ENCODE measurements at regions of chr19 and their contacts with region 1.

Region 1: DNA sequence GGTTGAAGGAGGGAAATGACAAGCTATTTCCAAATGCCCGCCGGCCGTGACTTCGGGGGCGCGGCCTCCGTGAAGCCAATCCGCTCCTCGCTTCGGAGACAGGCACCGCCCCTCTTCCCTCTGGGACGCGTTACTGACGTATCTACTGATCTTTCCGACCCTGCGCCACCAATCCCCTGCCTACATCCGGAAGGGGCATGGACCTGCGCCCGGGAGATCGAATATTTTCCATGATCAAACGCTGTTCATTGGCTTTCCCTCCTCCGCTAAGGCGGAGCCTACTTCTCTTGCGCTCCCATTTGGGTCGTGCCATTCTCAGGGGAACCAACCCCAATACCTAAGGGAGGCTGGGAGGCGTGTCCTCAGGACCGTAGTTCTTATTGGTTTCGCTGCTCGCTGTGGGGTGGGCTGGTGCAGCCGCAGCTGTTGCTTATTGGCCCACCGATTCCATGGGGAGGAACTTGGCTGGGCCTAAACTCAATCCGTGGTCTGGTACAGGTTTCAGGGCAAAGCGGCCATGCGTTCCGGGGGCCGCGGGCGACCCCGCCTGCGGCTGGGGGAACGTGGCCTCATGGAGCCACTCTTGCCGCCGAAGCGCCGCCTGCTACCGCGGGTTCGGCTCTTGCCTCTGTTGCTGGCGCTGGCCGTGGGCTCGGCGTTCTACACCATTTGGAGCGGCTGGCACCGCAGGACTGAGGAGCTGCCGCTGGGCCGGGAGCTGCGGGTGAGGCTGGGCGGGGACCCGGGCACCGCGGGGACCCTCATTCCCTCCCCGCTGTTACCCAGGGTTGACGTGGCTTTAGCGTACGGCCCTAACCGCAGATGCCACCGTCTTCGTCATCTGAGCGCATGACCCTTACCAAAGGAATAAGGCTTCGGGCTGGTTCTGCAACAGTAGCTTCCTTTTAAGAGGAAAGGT is at the start of gene QPCTL:
- DNase-seq: peak; percentile 100
- H3K4me3 Mint-ChIP-seq: peak within 1 kb of the TSS; percentile 85
- H3K27ac Mint-ChIP-seq: peak within 1 kb of the TSS; percentile 95
- H3K4me1 Mint-ChIP-seq: peaks cover 6% of the 10 kb centered on the region
- H3K27me3 Mint-ChIP-seq: no peaks in the 10 kb centered on the region
- CTCF ChIP-seq: no peak
- total RNA-seq, gene QPCTL: 14.9 and 17.3 TPM in 2 replicates

Region 2: DNA sequence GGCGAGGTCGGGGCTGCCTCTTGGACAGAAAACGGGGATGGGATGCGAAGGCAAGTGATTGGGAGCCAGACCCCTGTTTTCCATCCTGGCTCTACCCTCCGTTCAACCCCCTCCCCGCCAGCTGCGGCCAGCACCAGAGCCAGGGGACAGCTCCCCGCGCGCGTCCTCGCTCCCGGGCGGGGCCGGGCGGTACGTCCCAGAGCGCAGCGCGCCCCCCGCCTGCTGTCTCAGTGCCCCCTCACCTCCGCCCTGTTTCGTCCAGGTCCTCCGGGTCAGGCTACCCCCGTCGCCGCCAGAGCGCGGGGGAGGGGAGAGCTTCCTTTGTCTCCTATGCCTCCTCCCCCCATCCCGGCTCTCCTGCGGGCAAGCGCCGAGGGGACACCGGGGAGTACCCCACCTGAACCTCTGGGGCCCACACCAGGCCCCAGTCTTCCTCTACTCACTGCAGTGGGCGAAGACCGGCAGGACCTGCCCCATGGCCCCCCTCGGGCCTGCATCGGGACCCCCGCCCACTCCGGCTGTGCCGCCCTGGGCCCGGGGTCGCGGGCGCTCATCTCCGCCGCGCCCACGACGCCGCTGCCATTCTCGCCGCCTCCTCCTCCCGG is 196.0 kb before region 1 on chr19:
- CTCF ChIA-PET with region 1: no interaction called
- POLR2A ChIA-PET with region 1: no interaction called
- intact Hi-C with region 1: no loop called
- DNase-seq: no peak
- H3K4me3 Mint-ChIP-seq: peak overlapping the region; percentile 75
- H3K27ac Mint-ChIP-seq: peak overlapping the region; percentile 24
- H3K4me1 Mint-ChIP-seq: peaks cover 13% of the 10 kb centered on the region
- H3K27me3 Mint-ChIP-seq: no peaks in the 10 kb centered on the region
- CTCF ChIP-seq: no peak

Region 3: GRCh38 chr19:45584332-45585157 is 107.9 kb before region 1 on chr19 and contains the start of gene OPA3:
- CTCF ChIA-PET with region 1: no interaction called
- POLR2A ChIA-PET with region 1: interaction called, 20 read pairs
- intact Hi-C with region 1: no loop called
- DNase-seq: peak; percentile 100
- H3K4me3 Mint-ChIP-seq: peak within 1 kb of the TSS; percentile 97
- H3K27ac Mint-ChIP-seq: peak within 1 kb of the TSS; percentile 98
- H3K4me1 Mint-ChIP-seq: peaks cover 11% of the 10 kb centered on the region
- H3K27me3 Mint-ChIP-seq: no peaks in the 10 kb centered on the region
- CTCF ChIP-seq: no peak
- total RNA-seq, gene OPA3: 16.8 and 17.3 TPM in 2 replicates

Region 4: GRCh38 chr19:45681391-45682015 is 10.9 kb before region 1 on chr19:
- CTCF ChIA-PET with region 1: interaction called, 10 read pairs
- POLR2A ChIA-PET with region 1: interaction called, 43 read pairs
- intact Hi-C with region 1: no loop called
- DNase-seq: peak; percentile 89
- H3K4me3 Mint-ChIP-seq: peak overlapping the region; percentile 72
- H3K27ac Mint-ChIP-seq: peak overlapping the region; percentile 61
- H3K4me1 Mint-ChIP-seq: peaks cover 11% of the 10 kb centered on the region
- H3K27me3 Mint-ChIP-seq: no peaks in the 10 kb centered on the region
- CTCF ChIP-seq: peak; percentile 92

Region 5: GRCh38 chr19:45705115-45705514 is 12.7 kb after region 1 on chr19:
- CTCF ChIA-PET with region 1: interaction called, 42 read pairs
- POLR2A ChIA-PET with region 1: interaction called, 28 read pairs
- intact Hi-C with region 1: no loop called
- DNase-seq: no peak
- H3K4me3 Mint-ChIP-seq: no peak overlapping the region
- H3K27ac Mint-ChIP-seq: no peak overlapping the region
- H3K4me1 Mint-ChIP-seq: no peaks in the 10 kb centered on the region
- H3K27me3 Mint-ChIP-seq: no peaks in the 10 kb centered on the region
- CTCF ChIP-seq: no peak

Region 6: GRCh38 chr19:45711851-45712698 is 19.6 kb after region 1 on chr19:
- CTCF ChIA-PET with region 1: interaction called, 42 read pairs
- POLR2A ChIA-PET with region 1: interaction called, 108 read pairs
- intact Hi-C with region 1: no loop called
- DNase-seq: no peak
- H3K4me3 Mint-ChIP-seq: no peak overlapping the region
- H3K27ac Mint-ChIP-seq: no peak overlapping the region
- H3K4me1 Mint-ChIP-seq: peaks cover 15% of the 10 kb centered on the region
- H3K27me3 Mint-ChIP-seq: no peaks in the 10 kb centered on the region
- CTCF ChIP-seq: no peak

Region 7: GRCh38 chr19:45717166-45717982 is 24.9 kb after region 1 on chr19:
- CTCF ChIA-PET with region 1: interaction called, 19 read pairs
- POLR2A ChIA-PET with region 1: interaction called, 108 read pairs
- intact Hi-C with region 1: no loop called
- DNase-seq: peak; percentile 100
- H3K4me3 Mint-ChIP-seq: peak overlapping the region; percentile 98
- H3K27ac Mint-ChIP-seq: peak overlapping the region; percentile 97
- H3K4me1 Mint-ChIP-seq: peaks cover 18% of the 10 kb centered on the region
- H3K27me3 Mint-ChIP-seq: no peaks in the 10 kb centered on the region
- CTCF ChIP-seq: no peak

Region 8: DNA sequence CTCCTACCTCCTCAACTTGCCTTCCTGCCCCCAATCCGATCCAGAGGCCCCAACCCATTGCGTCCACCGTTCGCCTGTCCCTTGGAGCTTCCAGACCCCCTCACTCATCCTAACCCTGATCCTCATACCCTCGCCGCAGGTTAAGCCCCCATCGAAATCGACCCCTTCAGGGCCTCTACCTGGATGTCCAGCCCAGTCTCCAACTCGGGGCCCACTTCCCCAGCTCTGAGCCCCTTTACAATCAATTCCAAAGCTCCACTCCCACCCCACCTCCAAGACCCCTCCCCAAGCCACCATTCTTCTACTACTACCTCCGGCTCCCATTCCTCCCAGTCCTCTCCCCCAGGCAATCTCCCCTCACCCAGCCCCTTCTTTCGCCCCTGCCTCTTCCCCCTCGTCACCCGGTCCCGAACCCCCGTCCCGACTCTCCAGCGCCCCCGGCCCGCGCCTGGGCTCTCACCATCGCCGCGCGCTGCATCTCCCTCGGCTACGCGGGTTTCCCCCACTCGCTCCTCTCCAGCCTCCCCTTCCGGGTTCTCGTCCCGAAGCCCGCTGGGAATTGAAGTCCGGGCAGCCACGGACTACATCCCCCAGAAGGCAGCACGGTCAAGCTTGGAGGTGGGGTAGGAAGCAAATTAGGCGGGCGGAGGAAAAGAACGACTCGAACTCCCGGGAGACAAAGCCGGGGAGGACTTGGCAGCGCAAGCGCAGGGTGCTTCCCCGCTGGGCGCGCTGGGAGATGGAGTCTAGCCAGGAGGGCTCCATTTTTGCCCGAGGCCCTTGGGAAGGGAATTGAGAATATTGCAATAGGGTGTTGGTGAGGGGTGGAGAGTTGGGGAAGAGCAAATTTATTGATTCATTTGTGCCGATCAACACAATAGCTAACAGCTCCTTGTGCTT is 38.2 kb after region 1 on chr19 and contains the start of gene FBXO46:
- CTCF ChIA-PET with region 1: interaction called, 7 read pairs
- POLR2A ChIA-PET with region 1: interaction called, 23 read pairs
- intact Hi-C with region 1: no loop called
- DNase-seq: peak; percentile 99
- H3K4me3 Mint-ChIP-seq: peak within 1 kb of the TSS; percentile 99
- H3K27ac Mint-ChIP-seq: peak within 1 kb of the TSS; percentile 82
- H3K4me1 Mint-ChIP-seq: peaks cover 13% of the 10 kb centered on the region
- H3K27me3 Mint-ChIP-seq: no peaks in the 10 kb centered on the region
- CTCF ChIP-seq: no peak
- total RNA-seq, gene FBXO46: 13.6 and 15.0 TPM in 2 replicates

Region 9: DNA sequence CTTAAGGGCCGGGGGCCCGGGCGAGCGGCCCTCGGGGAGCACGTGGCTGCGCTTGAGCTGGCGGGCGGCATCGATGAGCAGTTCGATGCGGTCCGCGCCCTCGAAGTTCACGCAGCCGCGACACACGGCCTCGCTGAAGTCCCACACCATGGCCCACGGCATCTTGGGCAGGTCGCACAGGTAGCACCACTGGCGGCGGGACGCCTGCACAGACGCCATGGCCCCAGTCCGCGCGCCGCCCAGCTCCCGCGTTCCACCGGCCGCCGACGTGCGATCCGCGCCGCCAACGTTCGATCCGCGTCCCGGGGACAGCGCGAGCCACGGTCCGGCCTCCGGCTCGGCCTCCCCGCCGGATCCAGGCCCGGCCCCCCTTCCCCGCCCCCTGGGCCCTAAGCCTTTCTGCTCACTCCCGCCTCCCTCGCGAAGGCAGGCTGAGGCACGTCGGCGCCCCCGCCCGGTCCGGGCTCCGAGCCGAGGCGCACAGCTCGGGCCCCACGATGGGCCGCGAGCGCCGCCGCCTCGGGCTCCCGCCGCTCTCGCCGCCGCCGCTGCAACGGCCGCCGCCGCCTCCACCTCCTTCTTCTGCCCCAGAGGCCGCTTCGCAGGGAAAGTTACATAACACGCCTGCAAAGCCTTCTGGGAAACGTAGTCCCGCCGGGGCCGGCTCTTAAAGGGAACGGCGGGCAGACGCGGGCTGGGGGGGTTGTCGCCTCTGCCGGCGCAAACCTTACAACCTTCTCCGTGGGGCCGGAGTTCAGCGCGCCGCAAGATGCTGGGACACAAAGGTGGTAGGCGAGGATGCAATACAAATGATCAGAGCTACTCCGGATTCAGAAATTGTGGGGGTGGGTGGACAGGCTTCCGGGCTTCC is 193.3 kb after region 1 on chr19 and contains the start of gene IRF2BP1:
- CTCF ChIA-PET with region 1: no interaction called
- POLR2A ChIA-PET with region 1: no interaction called
- intact Hi-C with region 1: no loop called
- DNase-seq: peak; percentile 96
- H3K4me3 Mint-ChIP-seq: peak within 1 kb of the TSS; percentile 97
- H3K27ac Mint-ChIP-seq: peak within 1 kb of the TSS; percentile 98
- H3K4me1 Mint-ChIP-seq: peaks cover 10% of the 10 kb centered on the region
- H3K27me3 Mint-ChIP-seq: no peaks in the 10 kb centered on the region
- CTCF ChIP-seq: no peak
- total RNA-seq, gene IRF2BP1: 14.7 and 18.1 TPM in 2 replicates

Region 10: GRCh38 chr19:45952686-45953505 is 260.4 kb after region 1 on chr19:
- CTCF ChIA-PET with region 1: no interaction called
- POLR2A ChIA-PET with region 1: no interaction called
- intact Hi-C with region 1: no loop called
- DNase-seq: peak; percentile 61
- H3K4me3 Mint-ChIP-seq: peak overlapping the region; percentile 23
- H3K27ac Mint-ChIP-seq: no peak overlapping the region
- H3K4me1 Mint-ChIP-seq: peaks cover 9% of the 10 kb centered on the region
- H3K27me3 Mint-ChIP-seq: peaks cover 11% of the 10 kb centered on the region
- CTCF ChIP-seq: no peak

Region 11: DNA sequence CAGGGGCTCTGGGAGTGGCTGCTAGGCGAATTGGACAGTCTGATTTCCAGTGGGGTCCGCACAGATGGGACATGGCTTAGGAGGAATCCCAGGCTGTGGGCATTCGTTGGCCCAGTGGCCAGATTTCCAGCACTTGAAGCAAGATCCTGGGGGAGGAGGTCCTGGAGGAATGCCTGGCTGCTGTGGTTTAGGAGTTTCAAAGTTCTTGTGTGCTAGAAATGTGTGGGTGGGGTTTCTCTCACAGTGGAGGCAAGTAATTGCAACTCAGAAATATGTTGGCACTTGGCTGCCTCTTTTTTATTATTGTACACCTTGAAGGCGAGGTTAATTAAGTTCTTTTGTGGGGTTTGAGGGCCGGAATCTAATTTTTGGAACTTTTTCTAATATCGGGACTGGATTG is 414.9 kb after region 1 on chr19:
- CTCF ChIA-PET with region 1: no interaction called
- POLR2A ChIA-PET with region 1: no interaction called
- intact Hi-C with region 1: no loop called
- DNase-seq: peak; percentile 65
- H3K4me3 Mint-ChIP-seq: no peak overlapping the region
- H3K27ac Mint-ChIP-seq: no peak overlapping the region
- H3K4me1 Mint-ChIP-seq: peaks cover 7% of the 10 kb centered on the region
- H3K27me3 Mint-ChIP-seq: no peaks in the 10 kb centered on the region
- CTCF ChIP-seq: no peak